Posterior vena cava (tissue), 2 donors: ENCODE measurements at regions of chr13 and their contacts with region 1.

Region 1: GRCh38 chr13:111216166-111216960 is 101.3 kb downstream of the ARHGEF7 start:
- DNase-seq: no peak

Region 2: GRCh38 chr13:111066544-111066943 is 149.8 kb before region 1 on chr13:
- intact Hi-C with region 1: loop called (anchors 5 kb)
- DNase-seq: no peak

Region 3: DNA sequence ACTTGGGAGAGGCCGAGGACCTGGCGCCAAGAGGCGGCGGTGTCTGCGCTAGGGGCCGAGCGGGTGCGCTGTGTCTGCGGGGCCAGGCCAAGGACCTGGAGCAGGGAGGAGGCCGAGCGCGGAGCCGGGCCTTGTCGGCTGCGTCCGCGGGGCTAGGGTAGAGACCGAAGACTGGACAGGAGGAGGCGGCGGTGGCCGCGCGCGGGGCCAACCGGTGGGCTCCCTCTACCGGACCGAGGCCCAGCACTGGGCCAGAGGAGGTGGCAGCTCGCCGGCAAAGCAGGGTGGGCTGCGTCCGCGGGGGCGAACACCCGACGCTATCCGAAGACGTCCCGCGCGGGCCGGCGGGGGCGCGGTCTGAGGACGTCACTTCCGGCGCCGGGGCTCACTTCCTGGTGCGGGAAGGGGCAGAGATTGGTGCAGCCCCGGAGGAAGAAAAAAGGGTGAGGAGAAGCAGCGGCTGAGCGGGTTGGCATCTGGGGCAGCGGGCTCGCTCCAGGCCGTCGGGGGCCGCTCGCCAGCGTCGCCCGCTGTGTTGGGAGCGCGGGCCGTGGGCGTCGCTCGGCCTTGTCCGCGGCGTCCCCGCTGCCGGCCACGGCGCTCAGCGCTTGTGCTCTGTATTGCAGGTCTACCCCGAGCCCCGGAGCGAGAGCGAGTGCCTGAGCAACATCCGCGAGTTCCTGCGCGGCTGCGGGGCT is 62.9 kb before region 1 on chr13:
- intact Hi-C with region 1: loop called (anchors 5 to 10 kb)
- DNase-seq: peak; percentile 99

Region 4: GRCh38 chr13:111202745-111203144 is 13.6 kb before region 1 on chr13:
- intact Hi-C with region 1: loop called in 1 of 2 experiments (anchors 1 kb)
- DNase-seq: no peak